Mammary epithelial cell (primary cell): ENCODE measurements at regions of chr19 and their contacts with region 1.

Region 1: GRCh38 chr19:56538254-56538760 is 441 bp upstream of the ZFP28 start:
- DNase-seq: peak; percentile 87
- H3K4me3 ChIP-seq: peak overlapping the region; percentile 74 to 89 (median 75)
- H3K27ac ChIP-seq: peak overlapping the region; percentile 18
- H3K4me1 ChIP-seq: no peaks in the 10 kb centered on the region
- H3K27me3 ChIP-seq: no peaks in the 10 kb centered on the region
- CTCF ChIP-seq: no peak

Region 2: DNA sequence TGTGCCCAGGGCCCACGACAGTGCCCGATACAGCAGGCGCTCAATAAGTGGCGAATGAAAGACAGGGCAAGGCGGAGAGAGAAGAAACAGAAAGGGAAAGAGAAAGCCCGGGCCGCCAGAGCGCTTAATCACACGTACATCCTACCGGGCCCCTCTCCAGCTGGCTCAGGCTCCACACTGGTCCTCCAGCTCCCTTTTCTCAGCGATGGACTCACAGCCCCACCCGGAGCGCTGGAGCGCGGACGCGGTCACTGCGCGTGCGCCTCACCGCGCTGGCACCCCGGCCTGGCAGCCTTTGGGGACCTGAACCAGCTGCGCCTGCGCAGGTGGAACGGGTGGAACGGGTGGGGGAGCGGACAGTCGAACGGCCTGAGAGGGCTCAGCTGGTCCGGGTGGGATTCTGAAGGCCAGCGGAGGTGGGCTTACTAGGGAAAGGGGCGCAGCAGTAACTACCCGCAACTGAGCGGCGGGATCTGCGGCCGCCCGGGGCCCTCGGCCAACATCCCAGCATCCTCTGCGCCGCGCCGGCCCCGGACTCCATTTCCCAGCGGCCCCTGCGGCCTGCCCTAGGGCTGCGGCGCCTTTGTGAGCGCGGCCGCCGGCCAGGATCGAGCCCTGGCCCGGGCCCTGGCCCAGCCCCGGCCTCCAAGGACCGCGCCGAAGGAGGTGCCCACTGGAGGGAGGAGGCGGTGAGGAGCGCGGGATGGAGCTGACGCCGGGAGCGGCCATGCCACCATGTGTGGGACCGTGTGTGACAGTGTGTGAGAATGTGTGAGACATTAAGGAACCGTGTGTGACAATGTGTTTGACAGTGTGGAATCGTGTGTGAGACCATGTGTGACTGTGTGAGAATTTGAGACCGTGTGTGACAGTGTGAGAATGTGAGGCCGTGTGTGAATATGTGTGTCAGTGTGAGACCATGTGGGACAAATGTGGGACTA is 134.3 kb before region 1 on chr19 and contains the start of gene ZNF583:
- CTCF ChIA-PET with region 1: no interaction called
- dilution Hi-C with region 1: no loop called
- in situ Hi-C with region 1: no loop called
- intact Hi-C with region 1: loop called (anchors 10 kb)
- DNase-seq: peak; percentile 96
- H3K4me3 ChIP-seq: peak within 1 kb of the TSS; percentile 64 to 88 (median 67)
- H3K27ac ChIP-seq: peak within 1 kb of the TSS; percentile 9
- H3K4me1 ChIP-seq: peaks cover 7% of the 10 kb centered on the region
- H3K27me3 ChIP-seq: no peaks in the 10 kb centered on the region
- CTCF ChIP-seq: no peak
- total RNA-seq, gene ZNF583: 4.7 to 5.5 TPM

Region 3: GRCh38 chr19:56477429-56478338 is 60.6 kb before region 1 on chr19:
- CTCF ChIA-PET with region 1: no interaction called
- dilution Hi-C with region 1: no loop called
- in situ Hi-C with region 1: no loop called
- intact Hi-C with region 1: loop called (anchors 1 kb)
- DNase-seq: peak; percentile 94
- H3K4me3 ChIP-seq: peak overlapping the region; percentile 47 to 64 (median 61)
- H3K27ac ChIP-seq: no peak overlapping the region
- H3K4me1 ChIP-seq: peaks cover 4% of the 10 kb centered on the region
- H3K27me3 ChIP-seq: no peaks in the 10 kb centered on the region
- CTCF ChIP-seq: no peak

Region 4: GRCh38 chr19:56507446-56508289 is 30.6 kb before region 1 on chr19 and contains the start of gene ZNF471:
- CTCF ChIA-PET with region 1: no interaction called
- dilution Hi-C with region 1: no loop called
- in situ Hi-C with region 1: no loop called
- intact Hi-C with region 1: loop called (anchors 2 kb)
- DNase-seq: peak; percentile 97
- H3K4me3 ChIP-seq: peak within 1 kb of the TSS; percentile 46 to 73 (median 55)
- H3K27ac ChIP-seq: peak within 1 kb of the TSS; percentile 1
- H3K4me1 ChIP-seq: peaks cover 5% of the 10 kb centered on the region
- H3K27me3 ChIP-seq: no peaks in the 10 kb centered on the region
- CTCF ChIP-seq: no peak
- total RNA-seq, gene ZNF471: 4.3 to 8.2 TPM

Region 5: DNA sequence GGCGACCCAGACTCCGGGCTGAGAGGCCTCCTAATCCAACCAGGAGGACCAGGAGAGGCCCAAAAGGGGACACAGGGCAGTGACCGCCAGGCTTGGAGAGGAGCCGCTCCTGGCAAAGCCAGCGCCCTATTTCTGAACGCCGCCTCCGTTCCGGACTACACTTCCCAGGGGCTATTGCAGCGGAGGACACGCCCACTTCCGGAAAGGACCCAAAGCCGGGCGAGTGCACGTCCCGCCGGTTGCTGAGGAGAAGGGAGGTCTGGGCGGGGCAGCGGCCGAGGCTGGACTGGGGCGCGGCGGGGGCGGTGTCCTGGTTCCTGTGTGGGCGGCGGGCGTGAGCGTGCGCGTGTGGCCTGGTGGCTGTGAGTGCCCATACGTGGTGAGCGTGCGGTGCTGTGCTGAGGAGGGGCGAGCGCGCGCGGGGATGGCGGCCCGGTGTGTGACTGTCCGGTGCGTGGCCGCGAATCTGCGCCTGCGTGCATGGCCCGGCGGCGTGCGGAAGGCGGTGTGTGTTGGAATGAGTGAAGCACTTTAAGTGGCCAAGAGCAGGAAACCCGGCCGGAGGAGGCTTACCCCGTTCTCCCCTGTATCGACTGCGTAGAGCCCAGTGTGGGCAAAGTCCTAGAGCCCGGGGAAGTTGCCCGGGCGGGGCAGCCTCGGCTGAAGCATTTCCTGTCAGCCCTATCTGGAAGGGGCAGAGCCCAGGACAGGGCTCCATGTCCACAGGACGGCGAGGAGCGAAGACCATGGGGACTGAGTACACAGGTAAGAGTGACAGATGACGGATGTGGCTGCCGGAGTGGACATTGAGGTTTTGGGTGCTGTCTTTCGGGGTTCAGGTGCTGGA is 29.2 kb after region 1 on chr19 and contains the start of gene ZNF470:
- CTCF ChIA-PET with region 1: no interaction called
- dilution Hi-C with region 1: no loop called
- in situ Hi-C with region 1: no loop called
- intact Hi-C with region 1: loop called (anchors 1 kb)
- DNase-seq: peak; percentile 93
- H3K4me3 ChIP-seq: peak within 1 kb of the TSS; percentile 56 to 92 (median 79)
- H3K27ac ChIP-seq: peak within 1 kb of the TSS; percentile 45
- H3K4me1 ChIP-seq: no peaks in the 10 kb centered on the region
- H3K27me3 ChIP-seq: no peaks in the 10 kb centered on the region
- CTCF ChIP-seq: no peak
- total RNA-seq, gene ZNF470: 4.3 to 5.8 TPM

Region 6: GRCh38 chr19:56577719-56578602 is 39.7 kb after region 1 on chr19:
- CTCF ChIA-PET with region 1: no interaction called
- dilution Hi-C with region 1: no loop called
- in situ Hi-C with region 1: no loop called
- intact Hi-C with region 1: no loop called
- DNase-seq: no peak
- H3K4me3 ChIP-seq: no peak overlapping the region
- H3K27ac ChIP-seq: no peak overlapping the region
- H3K4me1 ChIP-seq: no peaks in the 10 kb centered on the region
- H3K27me3 ChIP-seq: no peaks in the 10 kb centered on the region
- CTCF ChIP-seq: no peak